Left lung (tissue), 14 donors: ENCODE measurements at regions of chr4 and their contacts with region 1.

Region 1: DNA sequence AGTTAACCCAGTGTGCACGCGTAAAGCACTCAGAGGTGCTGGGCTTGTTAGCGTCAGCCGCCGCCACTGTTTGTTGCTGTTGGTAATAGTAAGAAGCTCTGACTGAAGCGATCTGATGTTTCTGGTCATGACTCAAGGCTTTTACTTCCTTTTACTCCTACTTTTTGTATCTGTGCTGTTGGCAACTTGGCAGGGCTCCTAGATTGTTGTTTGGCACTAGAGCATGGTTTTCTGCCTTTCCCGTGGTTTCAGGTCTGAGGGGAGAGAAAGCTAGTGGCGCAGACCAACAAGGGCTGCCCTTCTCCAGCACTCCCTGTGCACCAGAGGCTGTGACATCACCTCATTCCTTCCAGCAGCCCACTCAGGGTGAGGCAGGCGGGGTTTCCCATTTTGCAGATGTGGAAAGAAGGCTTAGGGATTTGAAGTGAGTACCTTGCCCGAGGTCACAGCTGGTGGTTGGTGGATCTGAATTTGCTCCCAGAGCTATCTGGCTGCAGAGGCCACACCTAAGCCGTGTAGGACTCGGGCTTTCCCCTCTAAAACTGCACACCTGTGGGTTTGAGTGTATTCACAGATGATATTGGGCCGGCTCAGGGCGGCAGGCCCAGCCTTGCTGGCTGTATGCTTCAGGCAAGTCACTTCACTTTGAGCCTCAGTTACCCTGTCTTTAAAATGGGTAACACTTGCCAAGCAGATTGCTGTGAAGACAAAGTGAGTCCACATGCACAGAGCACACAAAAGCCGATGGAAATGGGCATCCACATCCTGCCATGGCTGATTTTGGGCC is 51.2 kb upstream of the TADA2B start:
- DNase-seq: no peak
- ATAC-seq: no peak
- H3K4me3 ChIP-seq: no peak overlapping the region
- H3K27ac ChIP-seq: peak overlapping the region in 1 of 2 donors; percentile 64
- H3K4me1 ChIP-seq: peaks cover 4 to 58% of the 10 kb centered on the region in 2 donors
- H3K27me3 ChIP-seq: no peaks in the 10 kb centered on the region
- CTCF ChIP-seq: no peak

Region 2: GRCh38 chr4:6840062-6840976 is 151.6 kb before region 1 on chr4:
- intact Hi-C with region 1: no loop called
- DNase-seq: no peak
- ATAC-seq: peak; percentile 33
- H3K4me3 ChIP-seq: no peak overlapping the region
- H3K27ac ChIP-seq: no peak overlapping the region
- H3K4me1 ChIP-seq: no peaks in the 10 kb centered on the region
- H3K27me3 ChIP-seq: no peaks in the 10 kb centered on the region
- CTCF ChIP-seq: no peak

Region 3: DNA sequence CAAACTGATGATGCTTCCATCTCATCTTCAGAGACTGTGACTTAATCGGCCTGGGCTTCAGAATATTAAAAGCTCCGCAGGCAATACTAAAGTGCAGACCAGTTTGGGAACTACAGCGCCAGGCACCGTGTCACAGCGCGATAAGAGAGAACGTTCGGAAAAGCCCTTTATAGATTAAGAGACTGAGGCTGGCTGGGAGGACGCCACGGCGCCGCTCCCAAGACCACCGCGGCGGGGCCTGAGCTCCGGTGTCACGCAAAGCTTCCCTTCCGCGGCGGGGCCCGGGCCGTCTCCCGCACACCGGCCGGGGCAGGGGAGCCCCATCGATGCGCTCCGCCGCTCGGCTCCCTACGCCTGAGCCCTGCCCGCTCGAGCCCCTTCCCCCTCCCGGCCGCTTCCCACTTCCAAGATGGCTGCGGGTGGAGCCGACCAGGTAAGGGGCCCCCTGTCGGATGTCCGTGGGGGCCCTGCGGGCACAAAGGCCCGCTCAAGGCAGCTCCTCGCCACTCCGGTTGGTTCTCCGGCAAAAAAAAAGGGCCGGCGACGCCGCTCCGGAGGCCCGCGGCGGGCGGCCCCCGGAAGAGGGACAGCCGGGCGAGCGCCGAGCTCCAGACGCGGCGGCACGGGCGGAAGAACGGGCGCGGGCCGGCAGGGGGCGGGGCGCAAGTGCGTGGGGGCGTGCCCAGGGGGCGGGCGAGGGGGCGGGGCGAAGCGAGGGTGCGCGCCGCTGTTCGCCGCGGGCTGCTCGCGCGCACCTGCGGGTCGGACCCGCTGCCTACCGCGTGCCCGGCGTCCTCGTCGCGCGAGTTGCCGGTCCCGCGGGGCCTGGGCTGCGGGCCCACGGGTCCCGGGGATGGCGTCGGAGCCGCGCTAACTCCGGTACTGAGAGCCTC is 82.6 kb before region 1 on chr4 and contains the start of gene TBC1D14:
- intact Hi-C with region 1: loop called in 1 of 2 experiments (anchors 10 kb)
- DNase-seq: peak; percentile 90 to 97 (median 92)
- ATAC-seq: peak; percentile 96
- H3K4me3 ChIP-seq: peak within 1 kb of the TSS; percentile 80 to 83
- H3K27ac ChIP-seq: peak within 1 kb of the TSS; percentile 96 to 99
- H3K4me1 ChIP-seq: peaks cover 13 to 58% of the 10 kb centered on the region in 2 donors
- H3K27me3 ChIP-seq: peaks cover 0 to 14% of the 10 kb centered on the region in 2 donors
- CTCF ChIP-seq: peak in 1 of 2 donors; percentile 13
- polyA plus RNA-seq, gene TBC1D14: 39.2 to 47.1 (median 44.2) TPM

Region 4: GRCh38 chr4:7295911-7296660 is 304.1 kb after region 1 on chr4:
- intact Hi-C with region 1: no loop called
- DNase-seq: peak in 1 of 4 donors; percentile 78
- ATAC-seq: peak; percentile 85
- H3K4me3 ChIP-seq: no peak overlapping the region
- H3K27ac ChIP-seq: no peak overlapping the region
- H3K4me1 ChIP-seq: no peaks in the 10 kb centered on the region
- H3K27me3 ChIP-seq: peaks cover 0 to 50% of the 10 kb centered on the region in 2 donors
- CTCF ChIP-seq: peak; percentile 23 to 28